Panc1 (cell line): ENCODE measurements at regions of chr17 and their contacts with region 1.

Region 1: DNA sequence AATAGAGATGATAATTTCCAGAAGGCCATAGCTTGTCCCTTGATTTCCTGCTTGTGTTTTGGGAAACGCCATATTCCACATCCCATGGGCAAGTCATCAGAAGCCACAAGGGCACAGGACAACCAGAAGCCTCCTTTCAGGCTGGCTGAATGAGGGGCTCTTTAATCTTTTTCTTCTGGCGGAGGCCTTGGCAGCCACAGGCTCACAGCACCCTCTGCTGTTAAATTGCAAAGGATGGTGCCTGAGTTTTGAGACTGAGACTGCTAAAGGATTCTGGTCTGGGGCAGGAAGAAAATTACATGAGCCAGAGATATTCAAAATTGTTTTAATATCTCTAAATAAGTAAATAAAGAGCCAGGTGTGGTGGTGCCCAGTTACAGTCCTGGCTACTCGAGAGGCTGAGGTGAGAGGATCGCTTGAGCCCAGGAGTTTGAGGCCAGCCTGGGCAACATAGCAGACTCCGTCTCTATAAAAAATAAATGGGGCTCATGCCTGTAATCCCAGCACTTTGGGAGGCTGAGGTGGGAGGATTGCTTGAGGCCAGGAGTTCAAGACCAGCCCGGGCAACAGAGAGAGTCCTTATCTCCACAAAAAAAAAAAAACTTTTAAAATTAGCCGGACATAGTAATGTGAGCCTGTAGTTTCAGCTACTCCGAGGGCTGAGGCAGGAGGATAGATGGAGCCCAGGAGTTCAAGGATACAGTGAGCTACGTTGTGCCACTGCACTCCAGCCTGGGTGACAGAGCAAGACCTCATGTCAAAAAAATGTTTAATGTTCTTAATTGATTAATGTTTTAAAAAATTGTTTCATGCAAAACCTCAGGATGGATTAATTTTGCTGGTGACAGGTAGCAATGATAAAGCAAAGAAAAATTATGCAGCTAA is 26.3 kb downstream of the AARSD1 start:
- DNase-seq: no peak
- ATAC-seq: peak; percentile 93
- H3K4me3 ChIP-seq: no peak overlapping the region
- H3K27ac ChIP-seq: no peak overlapping the region
- H3K4me1 ChIP-seq: no peaks in the 10 kb centered on the region
- H3K27me3 ChIP-seq: no peaks in the 10 kb centered on the region
- CTCF ChIP-seq: peak; percentile 78

Region 2: GRCh38 chr17:42720996-42721583 is 216.9 kb before region 1 on chr17:
- CTCF ChIA-PET with region 1: no interaction called
- POLR2A ChIA-PET with region 1: no interaction called
- in situ Hi-C with region 1: no loop called
- intact Hi-C with region 1: loop called (anchors 5 kb)
- DNase-seq: no peak
- ATAC-seq: peak; percentile 84
- H3K4me3 ChIP-seq: no peak overlapping the region
- H3K27ac ChIP-seq: no peak overlapping the region
- H3K4me1 ChIP-seq: no peaks in the 10 kb centered on the region
- H3K27me3 ChIP-seq: no peaks in the 10 kb centered on the region
- CTCF ChIP-seq: peak; percentile 59; the same call in 1 of the 2 replicates

Region 3: DNA sequence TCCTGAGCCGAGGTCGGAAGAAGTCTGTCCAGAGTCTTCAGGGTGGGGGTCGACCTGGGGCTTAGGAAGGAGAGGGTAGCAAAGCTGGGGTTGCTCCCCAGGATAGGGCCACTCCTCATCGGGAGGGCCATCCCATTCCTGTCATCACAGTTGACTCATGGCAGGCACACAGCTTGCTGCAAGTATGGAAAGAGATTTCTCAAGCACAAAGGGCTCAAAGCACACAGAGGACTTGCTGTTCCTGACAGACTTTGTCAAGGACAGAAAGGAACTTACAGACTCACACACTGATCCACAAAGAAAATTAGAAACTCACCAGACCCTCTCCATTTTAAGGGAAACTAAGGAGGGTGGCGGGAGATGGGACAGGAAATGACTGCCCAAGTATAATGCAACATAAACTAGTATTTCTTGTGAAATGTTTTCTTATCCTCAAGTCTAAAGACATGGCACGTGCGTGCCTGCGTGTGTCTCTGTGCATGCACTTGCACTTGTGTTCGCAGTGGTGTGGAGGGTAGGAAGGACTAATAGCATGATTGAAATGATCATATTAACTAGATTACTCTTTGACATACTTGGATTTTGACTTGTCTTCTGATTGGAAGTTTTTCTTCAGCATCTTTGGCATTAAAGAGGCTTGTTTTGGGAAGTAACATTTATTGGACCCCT is 91.2 kb before region 1 on chr17:
- CTCF ChIA-PET with region 1: interaction called, 3 read pairs
- POLR2A ChIA-PET with region 1: no interaction called
- in situ Hi-C with region 1: no loop called
- intact Hi-C with region 1: loop called (anchors 5 kb)
- DNase-seq: no peak
- ATAC-seq: peak; percentile 36; the same call in 1 of the 2 replicates
- H3K4me3 ChIP-seq: no peak overlapping the region
- H3K27ac ChIP-seq: no peak overlapping the region
- H3K4me1 ChIP-seq: no peaks in the 10 kb centered on the region
- H3K27me3 ChIP-seq: no peaks in the 10 kb centered on the region
- CTCF ChIP-seq: no peak

Region 4: GRCh38 chr17:42969001-42969581 is 31.1 kb after region 1 on chr17:
- CTCF ChIA-PET with region 1: no interaction called
- POLR2A ChIA-PET with region 1: no interaction called
- in situ Hi-C with region 1: no loop called
- intact Hi-C with region 1: no loop called
- DNase-seq: no peak
- ATAC-seq: no peak
- H3K4me3 ChIP-seq: no peak overlapping the region
- H3K27ac ChIP-seq: no peak overlapping the region
- H3K4me1 ChIP-seq: no peaks in the 10 kb centered on the region
- H3K27me3 ChIP-seq: no peaks in the 10 kb centered on the region
- CTCF ChIP-seq: no peak

Region 5: DNA sequence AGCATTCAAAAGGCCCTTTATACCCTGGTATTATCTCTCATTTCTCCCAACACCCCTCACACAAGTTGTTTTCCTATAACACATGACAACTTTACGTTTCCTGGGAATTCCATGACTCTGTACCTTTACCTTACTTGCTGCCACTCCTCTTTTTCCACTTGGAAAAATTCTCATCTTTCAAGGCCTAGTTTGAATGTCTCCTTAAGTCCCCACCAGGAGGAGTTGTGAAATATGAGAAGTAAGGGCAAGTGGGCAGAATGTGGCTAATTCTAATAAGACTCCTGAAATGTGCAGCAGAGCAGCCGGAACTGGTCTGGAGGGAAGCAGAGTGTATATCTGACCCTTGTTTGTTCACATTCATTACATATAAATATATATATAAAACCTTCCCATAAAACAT is 147.5 kb after region 1 on chr17:
- CTCF ChIA-PET with region 1: no interaction called
- POLR2A ChIA-PET with region 1: no interaction called
- in situ Hi-C with region 1: no loop called
- intact Hi-C with region 1: no loop called
- DNase-seq: no peak
- ATAC-seq: no peak
- H3K4me3 ChIP-seq: no peak overlapping the region
- H3K27ac ChIP-seq: no peak overlapping the region
- H3K4me1 ChIP-seq: no peaks in the 10 kb centered on the region
- H3K27me3 ChIP-seq: no peaks in the 10 kb centered on the region
- CTCF ChIP-seq: no peak